CD8-positive, alpha-beta T cell (primary cell): ENCODE measurements at regions of chrX and their contacts with region 1.

Region 1: GRCh38 chrX:104922206-104922621 is 298.3 kb downstream of the TEX13A start:
- DNase-seq: peak; percentile 16 to 72 (median 54)
- ATAC-seq: peak; percentile 99
- H3K4me3 ChIP-seq: no peak overlapping the region
- H3K4me3 Mint-ChIP-seq: no peak overlapping the region
- H3K27ac ChIP-seq: no peak overlapping the region
- H3K27ac Mint-ChIP-seq: no peak overlapping the region
- H3K4me1 ChIP-seq: no peaks in the 10 kb centered on the region
- H3K4me1 Mint-ChIP-seq: no peaks in the 10 kb centered on the region
- H3K27me3 ChIP-seq: no peaks in the 10 kb centered on the region
- H3K27me3 Mint-ChIP-seq: no peaks in the 10 kb centered on the region
- CTCF ChIP-seq: peak; percentile 71

Region 2: GRCh38 chrX:103157496-103158320 is 1764.5 kb before region 1 on chrX:
- CTCF ChIA-PET with region 1: no interaction called
- POLR2A ChIA-PET with region 1: no interaction called
- intact Hi-C with region 1: no loop called
- DNase-seq: peak in 3 of 9 experiments; percentile 7 to 20 (median 10)
- ATAC-seq: no peak
- H3K4me3 ChIP-seq: no peak overlapping the region
- H3K4me3 Mint-ChIP-seq: no peak overlapping the region
- H3K27ac ChIP-seq: no peak overlapping the region
- H3K27ac Mint-ChIP-seq: no peak overlapping the region
- H3K4me1 ChIP-seq: no peaks in the 10 kb centered on the region
- H3K4me1 Mint-ChIP-seq: no peaks in the 10 kb centered on the region
- H3K27me3 ChIP-seq: no peaks in the 10 kb centered on the region
- H3K27me3 Mint-ChIP-seq: no peaks in the 10 kb centered on the region
- CTCF ChIP-seq: peak; percentile 50

Region 3: GRCh38 chrX:104195489-104196084 is 726.6 kb before region 1 on chrX:
- CTCF ChIA-PET with region 1: no interaction called
- POLR2A ChIA-PET with region 1: no interaction called
- intact Hi-C with region 1: loop called (anchors 5 kb)
- DNase-seq: peak in 2 of 9 experiments; percentile 36 to 50
- ATAC-seq: peak; percentile 29
- H3K4me3 ChIP-seq: no peak overlapping the region
- H3K4me3 Mint-ChIP-seq: no peak overlapping the region
- H3K27ac ChIP-seq: no peak overlapping the region
- H3K27ac Mint-ChIP-seq: no peak overlapping the region
- H3K4me1 ChIP-seq: no peaks in the 10 kb centered on the region
- H3K4me1 Mint-ChIP-seq: no peaks in the 10 kb centered on the region
- H3K27me3 ChIP-seq: no peaks in the 10 kb centered on the region
- H3K27me3 Mint-ChIP-seq: no peaks in the 10 kb centered on the region
- CTCF ChIP-seq: peak; percentile 81

Region 4: GRCh38 chrX:104565791-104566680 is 356.2 kb before region 1 on chrX and contains the start of gene IL1RAPL2:
- CTCF ChIA-PET with region 1: no interaction called
- POLR2A ChIA-PET with region 1: no interaction called
- intact Hi-C with region 1: loop called in 1 of 2 experiments (anchors 5 kb)
- DNase-seq: no peak
- ATAC-seq: no peak
- H3K4me3 ChIP-seq: no peak within 1 kb of the TSS
- H3K4me3 Mint-ChIP-seq: no peak within 1 kb of the TSS
- H3K27ac ChIP-seq: no peak within 1 kb of the TSS
- H3K27ac Mint-ChIP-seq: no peak within 1 kb of the TSS
- H3K4me1 ChIP-seq: no peaks in the 10 kb centered on the region
- H3K4me1 Mint-ChIP-seq: no peaks in the 10 kb centered on the region
- H3K27me3 ChIP-seq: no peaks in the 10 kb centered on the region
- H3K27me3 Mint-ChIP-seq: peaks cover 15% of the 10 kb centered on the region
- CTCF ChIP-seq: no peak
- total RNA-seq, gene IL1RAPL2: not detected

Region 5: DNA sequence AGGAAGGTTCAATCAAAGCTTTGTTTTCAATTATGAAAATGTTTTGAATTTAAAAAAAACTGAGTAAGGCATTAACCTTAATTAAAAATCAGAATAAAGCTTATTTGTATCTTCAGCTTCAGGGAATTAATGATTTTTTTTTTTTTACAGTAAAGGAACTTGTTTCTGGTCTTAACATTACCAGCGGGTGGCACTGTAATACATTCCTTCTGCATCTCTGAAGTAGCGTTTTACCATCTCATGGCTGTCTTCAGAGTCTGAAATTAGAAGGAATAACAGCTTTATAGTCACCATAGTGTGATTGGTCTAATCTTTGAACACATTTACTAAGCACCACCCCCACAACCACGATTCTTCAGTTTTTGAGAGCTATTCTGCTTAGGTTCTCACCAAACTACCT is 253.7 kb before region 1 on chrX:
- CTCF ChIA-PET with region 1: interaction called, 4 read pairs
- POLR2A ChIA-PET with region 1: no interaction called
- intact Hi-C with region 1: loop called in 1 of 2 experiments (anchors 2 kb)
- DNase-seq: peak in 2 of 9 experiments; percentile 0
- ATAC-seq: no peak
- H3K4me3 ChIP-seq: no peak overlapping the region
- H3K4me3 Mint-ChIP-seq: no peak overlapping the region
- H3K27ac ChIP-seq: no peak overlapping the region
- H3K27ac Mint-ChIP-seq: no peak overlapping the region
- H3K4me1 ChIP-seq: no peaks in the 10 kb centered on the region
- H3K4me1 Mint-ChIP-seq: no peaks in the 10 kb centered on the region
- H3K27me3 ChIP-seq: no peaks in the 10 kb centered on the region
- H3K27me3 Mint-ChIP-seq: peaks cover 1% of the 10 kb centered on the region
- CTCF ChIP-seq: no peak

Region 6: GRCh38 chrX:104804018-104804417 is 118.2 kb before region 1 on chrX:
- CTCF ChIA-PET with region 1: interaction called, 3 read pairs
- POLR2A ChIA-PET with region 1: no interaction called
- intact Hi-C with region 1: loop called in 1 of 2 experiments (anchors 10 kb)
- DNase-seq: peak in 1 of 9 experiments; percentile 0
- ATAC-seq: no peak
- H3K4me3 ChIP-seq: no peak overlapping the region
- H3K4me3 Mint-ChIP-seq: no peak overlapping the region
- H3K27ac ChIP-seq: no peak overlapping the region
- H3K27ac Mint-ChIP-seq: no peak overlapping the region
- H3K4me1 ChIP-seq: no peaks in the 10 kb centered on the region
- H3K4me1 Mint-ChIP-seq: no peaks in the 10 kb centered on the region
- H3K27me3 ChIP-seq: no peaks in the 10 kb centered on the region
- H3K27me3 Mint-ChIP-seq: no peaks in the 10 kb centered on the region
- CTCF ChIP-seq: no peak

Region 7: GRCh38 chrX:104953251-104953650 is 31.0 kb after region 1 on chrX:
- CTCF ChIA-PET with region 1: no interaction called
- POLR2A ChIA-PET with region 1: no interaction called
- intact Hi-C with region 1: no loop called
- DNase-seq: no peak
- ATAC-seq: no peak
- H3K4me3 ChIP-seq: no peak overlapping the region
- H3K4me3 Mint-ChIP-seq: no peak overlapping the region
- H3K27ac ChIP-seq: no peak overlapping the region
- H3K27ac Mint-ChIP-seq: no peak overlapping the region
- H3K4me1 ChIP-seq: no peaks in the 10 kb centered on the region
- H3K4me1 Mint-ChIP-seq: no peaks in the 10 kb centered on the region
- H3K27me3 ChIP-seq: no peaks in the 10 kb centered on the region
- H3K27me3 Mint-ChIP-seq: no peaks in the 10 kb centered on the region
- CTCF ChIP-seq: no peak